Activated CD4-positive, alpha-beta T cell treated with anti-CD3 and anti-CD28 coated beads, Interleukin-2, amount 10 ng/mL, durations not matched to agents 24 days and 14 days (primary cell): ENCODE measurements at regions of chr9 and their contacts with region 1.

Region 1: DNA sequence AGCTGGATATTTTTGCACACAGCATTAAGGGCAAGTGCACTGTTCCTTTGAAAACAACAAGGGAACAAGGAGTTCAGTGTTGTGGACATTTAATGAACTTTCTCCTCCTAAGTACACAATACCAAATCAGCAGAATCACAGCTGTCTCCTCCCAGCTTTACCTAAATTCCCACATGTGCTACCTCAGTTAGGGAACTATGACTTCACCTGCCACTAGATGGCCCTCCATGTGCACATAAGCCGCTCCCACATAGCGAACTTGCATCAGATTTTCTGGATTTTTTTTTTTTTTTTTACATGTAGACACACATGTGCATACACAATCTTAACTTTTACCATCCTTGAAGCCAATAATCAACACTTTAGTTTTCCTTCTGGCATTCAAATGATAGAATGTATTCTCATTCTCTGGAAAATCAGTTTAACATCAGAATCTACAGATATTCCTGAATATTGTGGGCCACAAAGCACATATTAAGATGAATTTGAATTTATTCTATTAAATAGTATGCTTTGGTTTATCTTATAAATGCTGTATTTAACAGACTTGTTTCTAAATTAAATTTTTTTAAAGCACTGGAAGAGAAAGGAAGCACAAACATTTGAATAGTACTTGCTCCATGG is 123.6 kb downstream of the PALM2AKAP2 start:
- DNase-seq: peak; percentile 90
- H3K4me3 Mint-ChIP-seq: no peak overlapping the region
- H3K27ac Mint-ChIP-seq: peak overlapping the region; percentile 23
- H3K4me1 Mint-ChIP-seq: peaks cover 36% of the 10 kb centered on the region
- H3K27me3 Mint-ChIP-seq: no peaks in the 10 kb centered on the region

Region 2: GRCh38 chr9:109880277-109881169 is 23.1 kb before region 1 on chr9:
- intact Hi-C with region 1: loop called (anchors 2 kb)
- DNase-seq: peak; percentile 81
- H3K4me3 Mint-ChIP-seq: peak overlapping the region; percentile 69
- H3K27ac Mint-ChIP-seq: no peak overlapping the region
- H3K4me1 Mint-ChIP-seq: peaks cover 29% of the 10 kb centered on the region
- H3K27me3 Mint-ChIP-seq: peaks cover 3% of the 10 kb centered on the region